CD8-positive, alpha-beta T cell (primary cell): ENCODE measurements at regions of chr2 and their contacts with region 1.

Region 1: DNA sequence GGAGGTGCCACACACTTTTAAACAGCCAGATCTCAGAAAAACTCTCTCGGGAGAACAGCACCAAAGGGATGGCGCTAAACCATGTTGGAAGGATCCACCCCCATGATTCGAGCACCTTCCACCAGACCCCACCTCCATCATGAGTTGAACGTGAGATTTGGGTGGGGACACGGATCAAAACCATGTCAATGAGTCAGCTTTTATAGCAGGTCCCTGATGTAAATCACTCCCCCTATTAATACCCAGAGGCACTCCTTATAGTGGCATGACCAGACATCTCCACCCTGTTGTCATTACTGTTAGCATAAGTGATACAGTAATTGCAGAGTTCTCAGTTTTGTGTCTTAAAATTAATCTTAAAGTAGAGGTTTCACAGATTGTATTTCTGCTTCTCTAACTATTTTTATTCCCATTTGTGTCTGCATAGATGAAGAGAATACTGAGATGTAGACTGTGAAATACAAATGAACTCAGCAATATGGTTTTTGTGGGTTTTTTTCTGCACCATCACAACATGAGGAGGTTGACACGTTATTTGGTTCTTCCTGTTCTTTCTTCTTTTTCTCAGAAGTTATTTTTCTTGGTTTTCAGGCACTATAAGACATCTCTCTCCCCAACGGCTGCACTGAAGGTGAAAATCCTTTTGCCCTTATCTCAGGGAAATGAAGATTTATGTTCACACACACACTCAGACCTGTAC is 218.2 kb downstream of the ARL4C start:
- DNase-seq: peak in 5 of 9 experiments; percentile 25 to 76 (median 44)
- ATAC-seq: peak; percentile 76
- H3K4me3 ChIP-seq: no peak overlapping the region
- H3K4me3 Mint-ChIP-seq: peak overlapping the region; percentile 38
- H3K27ac ChIP-seq: peak overlapping the region in 1 of 2 experiments; percentile 47
- H3K27ac Mint-ChIP-seq: peak overlapping the region; percentile 85
- H3K4me1 ChIP-seq: peaks cover 36% of the 10 kb centered on the region
- H3K4me1 Mint-ChIP-seq: peaks cover 55% of the 10 kb centered on the region
- H3K27me3 ChIP-seq: no peaks in the 10 kb centered on the region
- H3K27me3 Mint-ChIP-seq: no peaks in the 10 kb centered on the region
- CTCF ChIP-seq: no peak

Region 2: DNA sequence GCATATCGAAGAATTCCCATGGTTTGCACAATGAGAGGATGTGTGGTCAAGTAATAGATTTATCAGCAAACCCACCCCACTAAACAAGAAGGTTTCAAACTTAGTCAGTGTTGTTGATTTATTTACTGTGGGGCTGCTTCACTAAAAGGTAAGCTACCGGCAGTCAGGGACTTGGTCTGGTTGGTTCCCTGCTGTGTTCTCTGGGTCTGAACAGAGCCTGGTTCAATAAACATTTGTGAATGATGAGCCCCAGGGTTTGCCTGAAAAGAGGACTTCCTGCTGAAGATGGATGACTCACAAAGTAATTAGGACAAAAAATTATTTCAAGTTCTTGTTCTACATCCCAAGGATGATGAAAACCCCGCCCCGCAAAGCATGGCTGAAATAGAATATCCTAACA is 119.9 kb before region 1 on chr2:
- CTCF ChIA-PET with region 1: no interaction called
- POLR2A ChIA-PET with region 1: no interaction called
- intact Hi-C with region 1: loop called in 1 of 2 experiments (anchors 5 kb)
- DNase-seq: no peak
- ATAC-seq: no peak
- H3K4me3 ChIP-seq: no peak overlapping the region
- H3K4me3 Mint-ChIP-seq: no peak overlapping the region
- H3K27ac ChIP-seq: no peak overlapping the region
- H3K27ac Mint-ChIP-seq: no peak overlapping the region
- H3K4me1 ChIP-seq: peaks cover 2% of the 10 kb centered on the region
- H3K4me1 Mint-ChIP-seq: peaks cover 8% of the 10 kb centered on the region
- H3K27me3 ChIP-seq: no peaks in the 10 kb centered on the region
- H3K27me3 Mint-ChIP-seq: no peaks in the 10 kb centered on the region
- CTCF ChIP-seq: no peak